Endothelial cell of umbilical vein (primary cell): ENCODE measurements at regions of chr19 and their contacts with region 1.

Region 1: DNA sequence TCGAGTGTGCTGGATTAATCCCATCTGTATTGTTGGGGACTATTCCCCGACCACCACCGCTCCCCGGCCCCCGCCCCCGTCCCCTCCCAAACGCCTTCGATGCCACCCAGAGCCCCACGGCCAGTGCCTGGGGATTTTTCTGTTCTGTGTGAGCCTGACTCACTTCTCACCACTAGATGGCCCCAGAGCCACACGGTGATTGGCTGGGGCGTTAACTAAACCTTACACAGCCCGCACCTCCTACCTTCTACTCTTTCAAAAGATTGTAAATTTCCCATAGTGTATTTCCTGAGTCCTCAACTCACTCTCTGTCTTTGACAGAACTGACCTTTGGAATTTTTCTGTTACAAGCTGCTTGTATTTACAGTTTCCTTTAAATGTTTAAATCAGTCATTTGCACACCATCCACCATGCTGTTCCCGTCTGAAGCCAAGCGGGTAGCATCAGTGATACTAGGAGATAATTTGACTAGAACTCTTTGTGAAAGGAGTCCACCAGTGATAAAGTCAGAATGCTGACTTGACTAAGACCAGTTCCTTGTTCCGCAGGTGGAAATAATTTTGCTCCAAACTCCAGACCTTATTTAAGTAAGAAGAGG is 61.4 kb downstream of the RFX2 start:
- DNase-seq: peak; percentile 77
- H3K4me3 ChIP-seq: no peak overlapping the region
- H3K27ac ChIP-seq: peak overlapping the region; percentile 20
- H3K4me1 ChIP-seq: peaks cover 4% of the 10 kb centered on the region
- H3K27me3 ChIP-seq: no peaks in the 10 kb centered on the region
- CTCF ChIP-seq: peak; percentile 61 to 83
- POLR2A ChIP-seq: no peak

Region 2: DNA sequence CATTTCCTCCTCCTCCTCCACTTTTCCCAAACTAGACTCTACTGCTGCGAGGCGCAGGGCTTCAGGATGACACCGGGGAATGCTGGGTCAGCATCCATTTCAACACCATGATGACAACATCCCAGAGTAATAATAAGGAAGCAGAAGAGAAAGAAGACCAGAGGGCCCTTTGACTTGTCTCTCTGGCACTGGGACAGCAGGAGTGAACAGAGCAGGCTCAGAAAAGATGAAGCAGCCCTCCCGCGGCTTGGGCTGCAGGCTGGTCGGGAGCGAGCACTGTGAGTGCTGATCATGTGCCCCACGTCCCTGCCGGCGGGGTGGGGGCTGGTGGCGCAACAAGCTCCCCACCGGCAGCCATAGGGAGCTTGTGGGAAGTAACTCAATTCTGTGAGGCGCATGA is 101.5 kb before region 1 on chr19:
- CTCF ChIA-PET with region 1: no interaction called
- POLR2A ChIA-PET with region 1: no interaction called
- dilution Hi-C with region 1: no loop called
- intact Hi-C with region 1: no loop called
- DNase-seq: no peak
- H3K4me3 ChIP-seq: no peak overlapping the region
- H3K27ac ChIP-seq: no peak overlapping the region
- H3K4me1 ChIP-seq: peaks cover 15% of the 10 kb centered on the region
- H3K27me3 ChIP-seq: no peaks in the 10 kb centered on the region
- CTCF ChIP-seq: no peak
- POLR2A ChIP-seq: no peak

Region 3: DNA sequence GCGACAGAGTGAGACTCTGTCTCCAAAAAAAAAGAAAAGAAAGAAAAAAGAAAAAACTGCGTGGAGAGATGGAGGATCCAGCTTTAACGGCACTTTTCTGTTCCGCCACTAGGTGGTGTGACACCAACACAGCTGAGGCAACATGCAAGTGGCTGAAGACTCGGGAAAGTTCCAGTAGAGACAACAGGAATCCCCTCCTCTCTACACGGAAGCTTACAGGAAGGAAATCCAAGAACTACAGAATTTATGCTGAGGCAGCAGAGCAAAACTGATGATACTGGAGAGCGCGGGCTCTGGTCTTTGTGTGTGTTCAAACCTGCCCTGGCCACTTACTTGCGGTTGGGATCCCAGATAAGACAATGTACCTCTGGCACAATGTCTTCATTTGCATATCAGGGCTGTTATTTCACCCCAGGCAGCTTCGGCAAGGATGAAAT is 80.9 kb before region 1 on chr19:
- CTCF ChIA-PET with region 1: interaction called, 10 read pairs
- POLR2A ChIA-PET with region 1: no interaction called
- dilution Hi-C with region 1: no loop called
- intact Hi-C with region 1: no loop called
- DNase-seq: peak; percentile 84
- H3K4me3 ChIP-seq: no peak overlapping the region
- H3K27ac ChIP-seq: peak overlapping the region; percentile 61
- H3K4me1 ChIP-seq: peaks cover 16% of the 10 kb centered on the region
- H3K27me3 ChIP-seq: no peaks in the 10 kb centered on the region
- CTCF ChIP-seq: peak; percentile 85 to 86
- POLR2A ChIP-seq: no peak

Region 4: GRCh38 chr19:6005321-6006069 is 43.4 kb before region 1 on chr19:
- CTCF ChIA-PET with region 1: no interaction called
- POLR2A ChIA-PET with region 1: no interaction called
- dilution Hi-C with region 1: no loop called
- intact Hi-C with region 1: no loop called
- DNase-seq: no peak
- H3K4me3 ChIP-seq: no peak overlapping the region
- H3K27ac ChIP-seq: no peak overlapping the region
- H3K4me1 ChIP-seq: no peaks in the 10 kb centered on the region
- H3K27me3 ChIP-seq: no peaks in the 10 kb centered on the region
- CTCF ChIP-seq: no peak
- POLR2A ChIP-seq: no peak

Region 5: DNA sequence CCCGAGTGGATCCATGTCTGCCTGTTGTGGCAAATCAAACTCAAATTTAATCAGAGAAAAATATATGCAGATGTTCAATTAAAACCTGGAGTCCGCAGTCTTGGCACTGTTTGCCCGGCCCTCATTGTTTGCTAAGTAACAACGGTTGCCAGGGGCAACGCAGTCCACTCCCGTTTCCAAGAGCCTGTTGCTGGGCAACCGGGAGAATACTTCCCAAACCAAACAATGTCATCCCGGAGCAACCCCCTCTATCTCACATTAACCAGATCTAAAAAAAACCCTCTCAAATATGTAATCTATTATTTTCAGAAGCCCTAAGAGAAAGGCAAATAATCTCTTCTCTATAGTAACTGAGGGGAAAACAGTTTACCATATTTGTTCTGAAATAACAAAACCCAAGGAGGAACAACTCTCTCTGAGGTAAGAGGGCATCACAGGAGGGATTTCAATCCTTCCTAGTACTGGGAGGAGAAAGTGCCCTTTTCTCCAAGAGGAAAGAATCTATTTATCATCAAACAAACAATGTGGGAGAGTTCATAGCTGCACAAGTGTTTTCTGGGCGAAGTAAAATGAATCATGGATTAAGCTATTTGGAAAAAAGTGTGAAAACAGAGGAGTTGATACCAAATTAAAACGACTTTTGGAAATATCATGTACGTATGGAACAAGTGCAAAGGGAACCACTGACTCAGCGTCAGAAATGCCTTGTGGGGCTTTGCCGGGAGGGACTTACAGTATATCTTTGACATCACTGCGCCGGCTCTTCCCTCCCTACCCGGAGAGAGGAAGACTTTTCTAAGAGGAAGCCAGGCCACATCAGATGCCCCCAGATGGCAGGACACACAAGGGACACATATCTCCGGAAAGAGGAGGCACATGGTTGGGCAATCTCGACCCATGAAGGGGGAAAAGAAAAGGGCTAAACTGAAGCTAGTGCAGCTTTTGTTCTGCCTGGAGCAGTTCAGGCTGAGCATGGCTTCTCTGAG is 18.0 kb after region 1 on chr19:
- CTCF ChIA-PET with region 1: interaction called, 23 read pairs
- POLR2A ChIA-PET with region 1: no interaction called
- dilution Hi-C with region 1: no loop called
- intact Hi-C with region 1: no loop called
- DNase-seq: peak; percentile 99
- H3K4me3 ChIP-seq: no peak overlapping the region
- H3K27ac ChIP-seq: peak overlapping the region; percentile 100
- H3K4me1 ChIP-seq: peaks cover 54% of the 10 kb centered on the region
- H3K27me3 ChIP-seq: no peaks in the 10 kb centered on the region
- CTCF ChIP-seq: no peak
- POLR2A ChIP-seq: no peak

Region 6: DNA sequence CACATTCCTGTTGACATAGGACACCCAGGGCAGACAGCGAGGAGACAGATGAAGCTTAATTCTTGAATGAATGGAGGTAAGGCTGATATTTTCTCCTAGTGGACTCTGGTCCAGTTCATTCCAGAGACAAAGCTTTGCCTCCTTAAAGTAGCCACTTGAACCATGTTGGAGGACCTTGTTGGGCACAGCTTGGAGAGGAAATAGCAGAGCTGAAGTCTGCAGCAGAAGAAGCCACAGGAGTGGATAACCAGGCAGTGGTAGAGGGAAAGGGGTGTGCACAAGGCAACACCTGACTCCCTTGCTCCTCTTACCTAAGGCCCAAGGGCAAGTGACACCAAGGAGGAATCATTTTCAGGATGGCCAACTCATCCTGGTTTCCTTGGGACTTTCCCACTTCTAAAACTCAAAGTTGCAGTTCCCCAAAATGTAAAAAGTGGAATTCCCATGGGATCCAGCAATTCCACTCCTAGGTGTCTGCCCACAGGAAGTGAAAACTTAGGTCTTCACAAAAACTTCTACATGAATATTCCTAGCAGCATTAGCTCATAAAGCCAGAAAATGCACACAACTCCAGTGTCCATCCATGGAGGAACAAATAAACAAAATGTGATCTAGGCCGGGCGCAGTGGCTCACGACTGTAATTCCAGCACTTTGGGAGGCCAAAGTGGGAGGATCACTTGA is 68.0 kb after region 1 on chr19:
- CTCF ChIA-PET with region 1: interaction called, 27 read pairs
- POLR2A ChIA-PET with region 1: no interaction called
- dilution Hi-C with region 1: no loop called
- intact Hi-C with region 1: no loop called
- DNase-seq: no peak
- H3K4me3 ChIP-seq: no peak overlapping the region
- H3K27ac ChIP-seq: no peak overlapping the region
- H3K4me1 ChIP-seq: no peaks in the 10 kb centered on the region
- H3K27me3 ChIP-seq: peaks cover 6% of the 10 kb centered on the region in 2 experiments
- CTCF ChIP-seq: no peak
- POLR2A ChIP-seq: no peak

Region 7: GRCh38 chr19:6297202-6297601 is 248.3 kb after region 1 on chr19:
- CTCF ChIA-PET with region 1: interaction called, 14 read pairs
- POLR2A ChIA-PET with region 1: no interaction called
- dilution Hi-C with region 1: no loop called
- intact Hi-C with region 1: loop called (anchors 1 kb)
- DNase-seq: no peak
- H3K4me3 ChIP-seq: no peak overlapping the region
- H3K27ac ChIP-seq: no peak overlapping the region
- H3K4me1 ChIP-seq: no peaks in the 10 kb centered on the region
- H3K27me3 ChIP-seq: no peaks in the 10 kb centered on the region
- CTCF ChIP-seq: no peak
- POLR2A ChIP-seq: no peak